ENCODE measurements at regions of chr17 and their contacts with region 1.

Region 1: GRCh38 chr17:79393358-79394202 is 217.3 kb downstream of the RBFOX3 start:
- DNase-seq: peak; percentile 47 to 77 (median 62)
- ATAC-seq: peak; percentile 76
- H3K4me3 ChIP-seq: no peak overlapping the region
- H3K4me3 Mint-ChIP-seq: no peak overlapping the region
- H3K27ac ChIP-seq: no peak overlapping the region
- H3K27ac Mint-ChIP-seq: no peak overlapping the region
- H3K4me1 ChIP-seq: peaks cover 7% of the 10 kb centered on the region
- H3K4me1 Mint-ChIP-seq: no peaks in the 10 kb centered on the region
- H3K27me3 ChIP-seq: peaks cover 24 to 28% of the 10 kb centered on the region in 2 experiments
- H3K27me3 Mint-ChIP-seq: peaks cover 72% of the 10 kb centered on the region
- CTCF ChIP-seq: peak; percentile 73

Region 2: GRCh38 chr17:79019632-79020584 is 373.7 kb before region 1 on chr17:
- CTCF ChIA-PET with region 1: no interaction called
- POLR2A ChIA-PET with region 1: no interaction called
- intact Hi-C with region 1: loop called in 1 of 2 experiments (anchors 2 kb)
- DNase-seq: peak in 13 of 14 experiments; percentile 26 to 74 (median 39)
- ATAC-seq: peak; percentile 56
- H3K4me3 ChIP-seq: no peak overlapping the region
- H3K4me3 Mint-ChIP-seq: peak overlapping the region; percentile 18
- H3K27ac ChIP-seq: no peak overlapping the region
- H3K27ac Mint-ChIP-seq: no peak overlapping the region
- H3K4me1 ChIP-seq: peaks cover 15% of the 10 kb centered on the region
- H3K4me1 Mint-ChIP-seq: peaks cover 8% of the 10 kb centered on the region
- H3K27me3 ChIP-seq: peaks cover 11 to 15% of the 10 kb centered on the region in 2 experiments
- H3K27me3 Mint-ChIP-seq: peaks cover 41% of the 10 kb centered on the region
- CTCF ChIP-seq: peak; percentile 67

Region 3: DNA sequence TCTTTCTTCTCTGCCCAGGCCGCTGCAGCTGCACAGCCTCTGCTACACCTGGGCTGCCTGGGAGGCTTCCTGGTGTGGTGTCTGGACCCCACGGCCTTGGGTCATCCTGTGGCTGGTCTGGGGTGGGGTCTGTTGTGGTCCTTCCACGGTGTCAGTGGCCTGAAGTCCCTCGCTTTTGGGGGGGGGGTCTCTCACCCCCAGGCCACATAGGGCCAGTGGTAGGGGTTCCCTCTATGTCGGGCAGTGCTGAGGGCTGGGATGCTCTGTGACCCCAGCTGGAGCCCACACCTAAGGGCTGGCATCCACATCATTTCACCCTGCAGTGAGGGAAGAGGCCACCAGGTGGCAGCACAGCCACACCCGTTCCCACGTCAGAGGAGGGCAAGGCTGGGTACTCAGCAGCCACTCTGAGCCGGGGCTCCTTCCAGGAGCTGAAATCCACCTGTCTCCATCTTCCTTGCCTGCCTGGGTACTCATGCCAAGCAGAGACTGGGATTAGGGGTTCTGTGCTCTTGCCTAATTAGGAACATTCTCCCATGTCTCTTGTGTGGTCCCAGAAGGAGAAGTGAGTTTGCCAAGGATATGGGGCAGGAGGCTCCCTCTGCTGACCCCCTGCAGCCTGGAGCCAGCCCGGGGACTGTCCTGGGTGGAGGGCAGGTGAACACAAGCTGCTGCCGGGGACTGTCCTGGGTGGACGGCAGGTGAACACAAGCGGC is 306.0 kb before region 1 on chr17:
- CTCF ChIA-PET with region 1: interaction called, 11 read pairs
- POLR2A ChIA-PET with region 1: no interaction called
- intact Hi-C with region 1: loop called (anchors 1 to 2 kb)
- DNase-seq: peak; percentile 51 to 84 (median 69)
- ATAC-seq: peak; percentile 93
- H3K4me3 ChIP-seq: no peak overlapping the region
- H3K4me3 Mint-ChIP-seq: no peak overlapping the region
- H3K27ac ChIP-seq: no peak overlapping the region
- H3K27ac Mint-ChIP-seq: no peak overlapping the region
- H3K4me1 ChIP-seq: peaks cover 14% of the 10 kb centered on the region
- H3K4me1 Mint-ChIP-seq: no peaks in the 10 kb centered on the region
- H3K27me3 ChIP-seq: no peaks in the 10 kb centered on the region
- H3K27me3 Mint-ChIP-seq: peaks cover 4% of the 10 kb centered on the region
- CTCF ChIP-seq: peak; percentile 91

Region 4: GRCh38 chr17:79760197-79760906 is 366.8 kb after region 1 on chr17:
- CTCF ChIA-PET with region 1: no interaction called
- POLR2A ChIA-PET with region 1: no interaction called
- intact Hi-C with region 1: no loop called
- DNase-seq: no peak
- ATAC-seq: no peak
- H3K4me3 ChIP-seq: no peak overlapping the region
- H3K4me3 Mint-ChIP-seq: no peak overlapping the region
- H3K27ac ChIP-seq: no peak overlapping the region
- H3K27ac Mint-ChIP-seq: no peak overlapping the region
- H3K4me1 ChIP-seq: no peaks in the 10 kb centered on the region
- H3K4me1 Mint-ChIP-seq: no peaks in the 10 kb centered on the region
- H3K27me3 ChIP-seq: peaks cover 3 to 4% of the 10 kb centered on the region in 2 experiments
- H3K27me3 Mint-ChIP-seq: peaks cover 22% of the 10 kb centered on the region
- CTCF ChIP-seq: no peak

Region 5: DNA sequence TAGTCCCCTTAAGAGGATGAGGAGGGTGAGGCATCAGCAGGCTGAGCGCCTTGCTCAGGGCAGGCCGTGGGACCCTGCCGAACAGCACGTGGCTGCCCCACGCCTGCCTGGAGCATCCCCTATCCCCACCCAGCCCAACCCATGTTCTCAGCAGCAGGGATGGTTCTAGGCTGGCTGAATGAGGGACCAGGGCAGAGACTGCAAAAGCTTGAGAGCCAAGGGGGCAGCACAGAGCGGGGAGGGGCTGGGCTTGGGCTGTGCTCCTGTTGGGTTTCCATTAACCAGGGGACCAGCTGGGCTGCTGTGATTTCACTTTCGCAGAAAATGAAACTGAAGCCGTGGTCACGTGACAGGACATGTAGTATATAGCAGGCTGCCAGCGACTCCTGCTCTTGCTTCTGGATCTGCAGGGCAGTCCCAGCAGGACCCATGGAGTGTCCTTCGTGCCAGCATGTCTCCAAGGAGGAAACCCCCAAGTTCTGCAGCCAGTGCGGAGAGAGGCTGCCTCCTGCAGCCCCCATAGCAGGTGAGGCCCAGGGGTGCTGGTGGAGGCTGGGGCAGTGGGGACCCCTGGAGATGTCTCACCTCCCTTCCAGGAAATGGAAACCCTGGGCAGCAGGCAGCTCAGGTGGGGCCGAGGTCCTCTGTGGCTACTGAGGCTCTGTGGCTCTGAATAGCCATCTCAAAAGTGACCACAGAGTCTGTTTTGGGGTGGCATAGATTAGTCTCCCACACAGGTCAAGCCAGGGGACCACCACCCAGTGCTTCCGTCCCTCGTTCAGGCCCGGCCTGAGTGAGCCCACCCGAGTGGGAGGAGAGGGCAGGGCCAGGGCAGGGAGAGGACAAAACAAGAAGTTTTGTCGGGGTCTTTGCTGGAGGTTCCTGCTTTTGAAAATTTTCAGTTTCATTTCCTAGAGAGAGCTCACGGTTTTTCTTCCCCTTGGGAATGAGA is 869.9 kb after region 1 on chr17:
- CTCF ChIA-PET with region 1: no interaction called
- POLR2A ChIA-PET with region 1: no interaction called
- intact Hi-C with region 1: no loop called
- DNase-seq: peak; percentile 60 to 95 (median 80)
- ATAC-seq: peak; percentile 28
- H3K4me3 ChIP-seq: peak overlapping the region; percentile 97
- H3K4me3 Mint-ChIP-seq: peak overlapping the region; percentile 98
- H3K27ac ChIP-seq: peak overlapping the region; percentile 76 to 97
- H3K27ac Mint-ChIP-seq: peak overlapping the region; percentile 94
- H3K4me1 ChIP-seq: peaks cover 88% of the 10 kb centered on the region
- H3K4me1 Mint-ChIP-seq: peaks cover 57% of the 10 kb centered on the region
- H3K27me3 ChIP-seq: no peaks in the 10 kb centered on the region
- H3K27me3 Mint-ChIP-seq: no peaks in the 10 kb centered on the region
- CTCF ChIP-seq: no peak